Esophagus squamous epithelium (tissue), 5 donors: ENCODE measurements at regions of chr15 and their contacts with region 1.

Region 1: GRCh38 chr15:27361438-27361837 is 390.5 kb downstream of the GABRG3 start:
- DNase-seq: no peak
- H3K4me3 ChIP-seq: no peak overlapping the region
- H3K27ac ChIP-seq: no peak overlapping the region
- H3K4me1 ChIP-seq: peaks cover 0 to 4% (median 0%) of the 10 kb centered on the region in 3 donors
- H3K27me3 ChIP-seq: peaks cover 0 to 15% (median 0%) of the 10 kb centered on the region in 4 donors
- CTCF ChIP-seq: no peak
- POLR2A ChIP-seq: no peak

Region 2: GRCh38 chr15:27059610-27060202 is 301.7 kb before region 1 on chr15:
- intact Hi-C with region 1: loop called (anchors 5 kb)
- DNase-seq: no peak
- H3K4me3 ChIP-seq: no peak overlapping the region
- H3K27ac ChIP-seq: no peak overlapping the region
- H3K4me1 ChIP-seq: no peaks in the 10 kb centered on the region
- H3K27me3 ChIP-seq: no peaks in the 10 kb centered on the region
- CTCF ChIP-seq: peak in 5 of 6 experiments; percentile 37 to 60 (median 42)
- POLR2A ChIP-seq: no peak

Region 3: GRCh38 chr15:27182561-27183110 is 178.8 kb before region 1 on chr15:
- intact Hi-C with region 1: no loop called
- DNase-seq: no peak
- H3K4me3 ChIP-seq: no peak overlapping the region
- H3K27ac ChIP-seq: no peak overlapping the region
- H3K4me1 ChIP-seq: no peaks in the 10 kb centered on the region
- H3K27me3 ChIP-seq: no peaks in the 10 kb centered on the region
- CTCF ChIP-seq: no peak
- POLR2A ChIP-seq: no peak

Region 4: DNA sequence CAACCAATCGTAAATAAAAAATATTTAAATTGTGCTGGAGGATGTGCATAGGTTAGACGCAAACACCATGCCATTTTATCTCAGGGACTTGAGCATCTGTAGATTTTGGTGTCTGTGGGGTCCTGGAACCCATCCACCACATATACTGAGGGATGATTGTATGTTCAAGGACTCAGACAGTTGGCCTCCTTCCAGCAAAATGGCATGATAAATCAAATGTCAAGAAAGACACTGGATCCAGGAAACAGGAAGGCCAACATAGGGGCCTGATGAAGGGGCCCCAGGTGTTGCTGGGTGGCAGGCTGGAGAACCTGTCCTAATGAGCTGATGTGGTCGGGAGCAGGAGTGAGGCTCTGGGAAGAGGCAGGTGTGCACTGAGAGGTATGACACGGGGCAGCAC is 100.9 kb before region 1 on chr15:
- intact Hi-C with region 1: no loop called
- DNase-seq: no peak
- H3K4me3 ChIP-seq: no peak overlapping the region
- H3K27ac ChIP-seq: no peak overlapping the region
- H3K4me1 ChIP-seq: no peaks in the 10 kb centered on the region
- H3K27me3 ChIP-seq: no peaks in the 10 kb centered on the region
- CTCF ChIP-seq: no peak
- POLR2A ChIP-seq: no peak

Region 5: GRCh38 chr15:27545494-27546255 is 184.2 kb after region 1 on chr15:
- intact Hi-C with region 1: loop called (anchors 10 kb)
- DNase-seq: no peak
- H3K4me3 ChIP-seq: no peak overlapping the region
- H3K27ac ChIP-seq: no peak overlapping the region
- H3K4me1 ChIP-seq: no peaks in the 10 kb centered on the region
- H3K27me3 ChIP-seq: no peaks in the 10 kb centered on the region
- CTCF ChIP-seq: no peak
- POLR2A ChIP-seq: no peak